Activated CD4-positive, alpha-beta memory T cell treated with anti-CD3 and anti-CD28 coated beads for 36 hours (primary cell): ENCODE measurements at regions of chr10 and their contacts with region 1.

Region 1: DNA sequence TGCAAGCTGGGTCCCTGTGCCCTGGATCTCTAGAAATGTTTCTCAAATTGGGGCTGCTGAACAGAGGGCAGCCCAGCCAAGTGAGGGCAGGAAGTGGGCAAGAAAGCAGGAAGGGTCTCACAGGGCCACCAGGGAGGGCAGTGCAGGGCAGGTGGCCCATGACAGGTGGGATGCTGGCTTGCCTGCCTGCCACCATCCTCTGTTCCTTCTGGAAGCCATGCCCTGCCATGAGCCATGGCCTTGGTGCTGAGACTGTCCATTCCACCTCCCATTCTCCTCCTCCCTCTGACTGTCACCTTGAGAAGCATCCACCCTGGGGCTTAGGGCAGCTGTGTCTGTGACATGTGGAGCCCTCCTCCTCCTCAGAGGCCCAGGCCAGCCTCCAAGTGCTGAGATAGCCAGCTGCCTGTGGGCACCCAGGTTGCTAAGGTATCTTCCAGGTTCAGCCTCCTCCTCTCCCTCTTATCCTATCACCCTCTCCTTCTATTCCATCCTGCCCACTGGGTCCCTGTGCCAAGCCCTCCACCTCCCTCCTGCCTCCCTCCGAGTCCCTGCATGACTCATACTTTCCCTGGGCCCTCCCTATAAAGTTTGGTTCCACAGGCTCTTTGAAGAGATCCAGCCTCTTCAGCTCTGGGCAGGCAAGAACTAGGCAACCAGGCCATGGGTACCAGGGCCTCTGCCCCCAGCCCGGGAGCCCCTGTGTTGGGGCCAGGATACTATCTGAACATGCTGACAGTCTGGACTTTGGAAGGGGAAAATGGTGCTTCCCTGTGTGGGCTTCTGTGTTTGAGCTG is 1.3 kb downstream of the VSIR start:
- DNase-seq: peak; percentile 72
- H3K4me3 Mint-ChIP-seq: peak overlapping the region; percentile 92
- H3K27ac Mint-ChIP-seq: peak overlapping the region; percentile 99
- H3K4me1 Mint-ChIP-seq: peaks cover 80% of the 10 kb centered on the region
- H3K27me3 Mint-ChIP-seq: no peaks in the 10 kb centered on the region

Region 2: GRCh38 chr10:71597821-71598498 is 174.1 kb before region 1 on chr10:
- CTCF ChIA-PET with region 1: no interaction called
- POLR2A ChIA-PET with region 1: no interaction called
- intact Hi-C with region 1: no loop called
- DNase-seq: no peak
- H3K4me3 Mint-ChIP-seq: no peak overlapping the region
- H3K27ac Mint-ChIP-seq: no peak overlapping the region
- H3K4me1 Mint-ChIP-seq: peaks cover 9% of the 10 kb centered on the region
- H3K27me3 Mint-ChIP-seq: no peaks in the 10 kb centered on the region

Region 3: GRCh38 chr10:71713135-71714030 is 58.6 kb before region 1 on chr10:
- CTCF ChIA-PET with region 1: interaction called, 47 read pairs
- POLR2A ChIA-PET with region 1: interaction called, 5 read pairs
- intact Hi-C with region 1: loop called (anchors 5 kb)
- DNase-seq: peak; percentile 63
- H3K4me3 Mint-ChIP-seq: peak overlapping the region; percentile 66
- H3K27ac Mint-ChIP-seq: peak overlapping the region; percentile 91
- H3K4me1 Mint-ChIP-seq: peaks cover 54% of the 10 kb centered on the region
- H3K27me3 Mint-ChIP-seq: no peaks in the 10 kb centered on the region

Region 4: DNA sequence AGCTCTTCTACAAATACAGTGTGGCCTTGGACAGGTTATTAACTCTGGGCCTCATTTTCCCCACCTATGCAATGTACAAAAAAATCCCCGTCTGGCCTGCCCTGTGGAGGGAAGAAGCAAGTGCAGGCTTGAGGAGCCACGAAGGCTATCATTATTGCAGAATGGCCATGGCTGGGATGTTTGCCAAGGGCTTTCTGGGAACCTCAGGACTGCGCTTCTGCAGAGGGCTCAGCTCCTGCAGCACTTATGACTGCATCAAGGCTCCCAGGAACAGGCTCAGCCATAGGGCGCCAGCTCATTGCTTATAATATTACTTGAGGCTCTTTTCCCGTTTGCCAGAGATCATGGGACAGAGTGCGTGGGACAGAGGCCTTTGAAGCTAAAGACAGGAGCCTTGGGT is 31.9 kb before region 1 on chr10:
- CTCF ChIA-PET with region 1: interaction called, 22 read pairs
- POLR2A ChIA-PET with region 1: interaction called, 8 read pairs
- intact Hi-C with region 1: loop called (anchors 2 kb)
- DNase-seq: no peak
- H3K4me3 Mint-ChIP-seq: no peak overlapping the region
- H3K27ac Mint-ChIP-seq: peak overlapping the region; percentile 98
- H3K4me1 Mint-ChIP-seq: peaks cover 99% of the 10 kb centered on the region
- H3K27me3 Mint-ChIP-seq: no peaks in the 10 kb centered on the region

Region 5: GRCh38 chr10:71748671-71749191 is 23.3 kb before region 1 on chr10:
- CTCF ChIA-PET with region 1: interaction called, 22 read pairs
- POLR2A ChIA-PET with region 1: interaction called, 17 read pairs
- intact Hi-C with region 1: loop called (anchors 2 kb)
- DNase-seq: peak; percentile 91
- H3K4me3 Mint-ChIP-seq: peak overlapping the region; percentile 73
- H3K27ac Mint-ChIP-seq: peak overlapping the region; percentile 98
- H3K4me1 Mint-ChIP-seq: peaks cover 97% of the 10 kb centered on the region
- H3K27me3 Mint-ChIP-seq: no peaks in the 10 kb centered on the region

Region 6: DNA sequence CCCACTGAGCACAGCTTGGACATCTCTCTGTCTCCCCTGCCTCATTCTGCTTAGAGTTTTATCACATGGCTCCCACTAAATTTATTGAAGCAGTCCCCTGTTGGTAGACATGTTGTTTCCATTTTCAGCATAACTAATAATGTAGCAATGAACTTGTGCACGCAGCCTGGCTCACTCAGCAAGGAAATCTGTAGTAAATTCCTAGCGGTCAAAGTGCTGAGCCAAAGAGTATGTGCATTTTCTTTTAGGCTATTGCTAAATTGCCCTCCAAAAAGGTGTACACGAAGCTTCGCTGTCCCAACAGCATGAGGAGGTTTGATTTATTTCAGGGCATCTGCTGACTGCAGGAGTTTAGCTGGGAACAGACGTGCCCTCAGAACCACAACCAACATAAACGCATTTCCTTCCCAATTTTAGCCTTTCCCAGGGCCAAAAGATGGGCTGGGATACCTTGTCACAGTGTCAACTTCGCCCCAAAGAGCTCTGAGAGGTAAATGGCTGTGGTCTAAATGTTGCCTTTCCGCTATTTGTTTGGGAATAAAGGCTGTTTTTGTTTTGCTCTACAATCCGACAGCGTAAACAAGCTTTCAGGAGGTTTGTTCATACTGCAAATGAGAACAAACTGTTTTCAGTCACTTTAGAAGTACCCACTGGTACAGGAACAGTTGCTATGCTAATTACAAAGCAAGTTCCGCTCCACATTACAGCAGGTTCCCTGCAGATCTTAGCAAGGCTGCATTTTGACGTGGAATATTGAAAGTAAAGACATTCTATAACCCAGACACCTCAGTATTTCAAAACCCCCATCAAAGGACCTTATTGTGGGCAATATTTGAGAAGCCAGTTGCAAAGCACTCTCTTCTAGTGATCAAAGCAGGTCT is 15.5 kb before region 1 on chr10:
- CTCF ChIA-PET with region 1: interaction called, 31 read pairs
- POLR2A ChIA-PET with region 1: interaction called, 108 read pairs
- intact Hi-C with region 1: loop called (anchors 1 kb)
- DNase-seq: no peak
- H3K4me3 Mint-ChIP-seq: peak overlapping the region; percentile 63
- H3K27ac Mint-ChIP-seq: peak overlapping the region; percentile 95
- H3K4me1 Mint-ChIP-seq: peaks cover 94% of the 10 kb centered on the region
- H3K27me3 Mint-ChIP-seq: no peaks in the 10 kb centered on the region

Region 7: GRCh38 chr10:71812016-71812912 is 40.2 kb after region 1 on chr10:
- CTCF ChIA-PET with region 1: interaction called, 23 read pairs
- POLR2A ChIA-PET with region 1: interaction called, 4 read pairs
- intact Hi-C with region 1: no loop called
- DNase-seq: peak; percentile 83
- H3K4me3 Mint-ChIP-seq: no peak overlapping the region
- H3K27ac Mint-ChIP-seq: no peak overlapping the region
- H3K4me1 Mint-ChIP-seq: no peaks in the 10 kb centered on the region
- H3K27me3 Mint-ChIP-seq: no peaks in the 10 kb centered on the region

Region 8: DNA sequence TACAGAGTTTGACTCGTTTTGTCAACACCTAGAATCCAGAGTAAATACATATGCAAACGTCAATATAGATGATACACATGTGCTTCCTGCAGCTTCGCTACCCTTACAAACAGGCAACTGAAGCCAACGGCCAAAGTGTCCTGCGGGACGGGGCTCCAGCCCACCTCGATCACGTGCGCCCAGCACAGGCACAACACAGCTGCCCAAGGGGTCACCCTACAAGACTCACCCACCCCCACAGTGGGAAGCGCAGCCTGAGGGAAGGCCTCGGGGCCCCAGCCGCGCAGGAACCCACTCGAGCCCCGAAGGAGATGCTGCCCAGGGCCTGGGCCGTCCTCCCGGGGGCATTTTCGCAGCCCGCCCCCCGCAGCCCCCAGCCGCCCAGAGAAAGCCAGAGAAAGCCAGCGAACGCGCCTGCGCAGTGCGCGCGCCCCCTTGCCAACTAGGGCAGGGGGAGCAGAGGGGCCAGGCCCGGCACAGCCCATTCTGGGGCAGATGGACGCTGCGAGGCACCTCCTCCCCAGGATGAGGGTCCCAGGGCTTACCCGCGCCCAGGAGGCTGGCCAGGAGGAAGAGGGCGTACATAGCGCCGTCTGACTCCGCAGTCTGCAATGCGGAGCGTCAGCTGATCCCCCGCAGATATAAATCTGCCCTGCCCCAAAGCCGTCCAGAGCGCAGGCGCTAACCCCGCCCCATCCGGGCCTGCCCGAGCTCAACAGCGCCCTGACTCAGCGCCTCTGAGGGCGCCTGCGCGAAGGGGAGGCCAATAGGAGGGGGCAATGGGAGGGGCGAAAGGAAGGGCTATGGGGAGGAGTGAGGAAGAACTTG is 78.8 kb after region 1 on chr10 and contains the start of gene PSAP:
- CTCF ChIA-PET with region 1: interaction called, 8 read pairs
- POLR2A ChIA-PET with region 1: interaction called, 3 read pairs
- intact Hi-C with region 1: loop called (anchors 2 kb)
- DNase-seq: peak; percentile 99
- H3K4me3 Mint-ChIP-seq: peak within 1 kb of the TSS; percentile 82
- H3K27ac Mint-ChIP-seq: peak within 1 kb of the TSS; percentile 76
- H3K4me1 Mint-ChIP-seq: peaks cover 41% of the 10 kb centered on the region
- H3K27me3 Mint-ChIP-seq: no peaks in the 10 kb centered on the region
- total RNA-seq, gene PSAP: 137 to 144 TPM